PC-3 (cell line): ENCODE measurements at regions of chr2 and their contacts with region 1.

Region 1: GRCh38 chr2:142877216-142877756 is at the start of gene KYNU:
- DNase-seq: peak; percentile 30
- ATAC-seq: no peak
- H3K4me3 ChIP-seq: no peak within 1 kb of the TSS
- H3K27ac ChIP-seq: peak within 1 kb of the TSS; percentile 98
- H3K4me1 ChIP-seq: peaks cover 69% of the 10 kb centered on the region
- H3K27me3 ChIP-seq: no peaks in the 10 kb centered on the region
- CTCF ChIP-seq: peak; percentile 48
- total RNA-seq, gene KYNU: 1.1 and 2.3 TPM in 2 replicates

Region 2: GRCh38 chr2:142754179-142754578 is 123.1 kb before region 1 on chr2:
- CTCF ChIA-PET with region 1: no interaction called
- POLR2A ChIA-PET with region 1: no interaction called
- intact Hi-C with region 1: loop called (anchors 1 kb)
- DNase-seq: peak; percentile 58
- ATAC-seq: peak; percentile 85
- H3K4me3 ChIP-seq: no peak overlapping the region
- H3K27ac ChIP-seq: no peak overlapping the region
- H3K4me1 ChIP-seq: peaks cover 24% of the 10 kb centered on the region
- H3K27me3 ChIP-seq: no peaks in the 10 kb centered on the region
- CTCF ChIP-seq: no peak

Region 3: DNA sequence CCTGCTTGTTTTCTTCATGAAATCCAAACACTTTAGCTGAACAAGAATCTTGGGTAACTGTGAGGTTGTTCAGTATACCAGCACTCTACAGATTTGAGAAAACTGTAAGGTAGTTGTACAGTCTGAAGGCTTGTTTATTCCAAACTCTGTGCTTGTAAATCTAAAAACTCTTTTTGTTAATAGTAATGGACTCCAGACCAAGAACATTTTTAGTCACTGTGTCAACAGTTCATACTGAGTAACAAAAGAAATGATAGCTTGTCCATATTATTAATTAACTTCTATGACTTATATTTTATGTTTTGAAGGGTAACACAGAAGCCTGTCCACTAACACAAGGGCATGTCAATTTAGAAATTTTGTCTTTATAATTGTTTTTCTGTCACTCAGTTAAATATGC is 72.0 kb before region 1 on chr2:
- CTCF ChIA-PET with region 1: no interaction called
- POLR2A ChIA-PET with region 1: no interaction called
- intact Hi-C with region 1: loop called (anchors 2 kb)
- DNase-seq: no peak
- ATAC-seq: peak; percentile 83
- H3K4me3 ChIP-seq: no peak overlapping the region
- H3K27ac ChIP-seq: peak overlapping the region; percentile 39
- H3K4me1 ChIP-seq: peaks cover 20% of the 10 kb centered on the region
- H3K27me3 ChIP-seq: no peaks in the 10 kb centered on the region
- CTCF ChIP-seq: no peak

Region 4: DNA sequence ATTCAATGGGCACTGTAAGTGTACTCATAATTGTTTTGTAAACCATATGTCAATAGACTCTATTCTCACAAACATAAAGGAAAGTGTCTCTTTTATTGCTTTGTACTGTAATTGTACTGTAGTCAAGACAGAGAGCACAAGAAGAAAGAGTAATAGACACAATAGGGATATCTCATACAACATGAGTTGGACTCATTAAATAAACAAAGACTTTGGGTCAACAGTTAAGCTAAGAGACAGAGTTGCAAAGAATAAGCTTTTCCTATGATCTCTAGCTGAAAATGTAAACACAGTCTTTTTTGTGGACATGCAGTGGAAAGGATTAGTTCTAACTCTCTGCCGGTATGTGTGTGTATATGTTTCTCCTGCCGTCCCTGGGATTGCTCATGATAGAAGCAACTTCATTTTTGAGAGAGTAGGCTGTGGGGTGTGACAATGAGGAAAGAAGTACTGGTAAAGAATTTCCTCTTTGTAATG is 13.8 kb before region 1 on chr2:
- CTCF ChIA-PET with region 1: no interaction called
- POLR2A ChIA-PET with region 1: interaction called, 3 read pairs
- intact Hi-C with region 1: loop called (anchors 1 kb)
- DNase-seq: peak; percentile 60
- ATAC-seq: peak; percentile 93
- H3K4me3 ChIP-seq: no peak overlapping the region
- H3K27ac ChIP-seq: peak overlapping the region; percentile 21
- H3K4me1 ChIP-seq: peaks cover 24% of the 10 kb centered on the region
- H3K27me3 ChIP-seq: no peaks in the 10 kb centered on the region
- CTCF ChIP-seq: no peak

Region 5: GRCh38 chr2:142980561-142981378 is 103.5 kb after region 1 on chr2:
- CTCF ChIA-PET with region 1: interaction called, 3 read pairs
- POLR2A ChIA-PET with region 1: interaction called, 3 read pairs
- intact Hi-C with region 1: loop called (anchors 1 kb)
- DNase-seq: peak; percentile 77
- ATAC-seq: peak; percentile 83
- H3K4me3 ChIP-seq: no peak overlapping the region
- H3K27ac ChIP-seq: peak overlapping the region; percentile 59
- H3K4me1 ChIP-seq: peaks cover 11% of the 10 kb centered on the region
- H3K27me3 ChIP-seq: no peaks in the 10 kb centered on the region
- CTCF ChIP-seq: peak; percentile 67